PC-3 (cell line): ENCODE measurements at regions of chr2 and their contacts with region 1.

Region 1: GRCh38 chr2:44130441-44130840 is 38.2 kb upstream of the PPM1B start:
- DNase-seq: no peak
- ATAC-seq: no peak
- H3K4me3 ChIP-seq: no peak overlapping the region
- H3K27ac ChIP-seq: no peak overlapping the region
- H3K4me1 ChIP-seq: peaks cover under 1% of the 10 kb centered on the region; the same call in 1 of the 2 replicates
- H3K27me3 ChIP-seq: no peaks in the 10 kb centered on the region
- CTCF ChIP-seq: no peak

Region 2: GRCh38 chr2:44155666-44156446 is 25.4 kb after region 1 on chr2:
- CTCF ChIA-PET with region 1: no interaction called
- POLR2A ChIA-PET with region 1: interaction called, 16 read pairs
- intact Hi-C with region 1: no loop called
- DNase-seq: peak; percentile 20
- ATAC-seq: peak; percentile 35
- H3K4me3 ChIP-seq: no peak overlapping the region
- H3K27ac ChIP-seq: no peak overlapping the region
- H3K4me1 ChIP-seq: no peaks in the 10 kb centered on the region
- H3K27me3 ChIP-seq: no peaks in the 10 kb centered on the region
- CTCF ChIP-seq: no peak